HEK293T (cell line): ENCODE measurements at regions of chr7 and their contacts with region 1.

Region 1: GRCh38 chr7:73606801-73607691 is 17.3 kb downstream of the MLXIPL start:
- DNase-seq: peak; percentile 80

Region 2: DNA sequence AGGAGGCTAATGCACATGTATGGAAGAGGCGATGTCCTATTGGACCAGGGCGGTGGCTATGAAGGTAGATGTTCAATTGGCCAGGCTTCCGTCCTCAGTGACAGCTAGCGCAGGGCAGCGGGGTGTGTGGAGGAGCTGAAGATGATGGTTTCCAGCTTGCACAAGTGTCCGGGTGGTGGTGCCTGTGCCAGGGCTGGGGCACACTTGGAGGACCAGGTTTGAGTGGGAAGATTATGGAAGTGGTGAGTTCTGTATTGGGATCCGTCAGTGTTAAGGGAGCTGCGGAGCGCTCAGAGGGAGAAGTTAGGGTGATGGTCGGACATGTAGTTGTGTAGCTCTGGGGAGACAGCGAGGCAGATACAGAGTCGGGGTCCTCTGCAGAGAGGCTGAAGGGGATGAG is 20.1 kb before region 1 on chr7:
- CTCF ChIA-PET with region 1: interaction called, 13 read pairs
- POLR2A ChIA-PET with region 1: no interaction called
- DNase-seq: no peak

Region 3: DNA sequence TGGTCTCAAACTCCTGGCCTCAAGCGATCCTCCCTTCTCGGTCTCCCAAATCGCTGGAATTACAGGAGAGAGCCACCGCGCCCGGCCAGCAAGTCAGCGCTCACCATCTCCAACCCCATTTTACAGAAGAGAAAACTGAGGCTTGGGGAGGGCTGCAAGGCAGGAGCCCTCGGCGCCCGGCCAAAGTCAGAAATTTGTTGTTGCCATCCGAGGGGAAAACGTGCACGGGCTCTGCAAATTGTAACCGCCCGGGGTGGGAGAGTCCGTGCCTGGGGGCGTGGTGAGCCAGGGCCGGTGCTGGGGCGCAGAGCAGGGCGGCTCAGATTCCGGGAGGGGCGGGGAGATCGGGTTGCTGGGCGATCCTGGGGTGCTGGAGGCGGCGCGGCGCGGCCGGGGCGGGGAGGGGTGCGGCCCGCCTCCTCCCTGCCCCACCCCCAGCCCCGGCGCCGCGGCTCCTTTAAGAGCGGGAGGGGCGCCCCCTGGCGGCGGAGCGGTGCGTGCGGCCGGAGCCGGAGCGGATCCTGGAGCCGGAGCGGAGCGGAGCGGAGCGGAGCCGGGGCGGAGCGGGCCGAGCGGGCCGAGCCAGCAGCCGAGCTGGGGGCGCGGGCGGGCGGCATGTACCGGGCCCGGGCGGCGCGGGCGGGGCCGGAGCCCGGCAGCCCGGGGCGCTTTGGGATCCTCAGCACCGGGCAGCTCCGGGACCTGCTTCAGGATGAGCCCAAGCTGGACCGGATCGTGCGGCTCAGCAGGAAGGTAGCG is 60.5 kb after region 1 on chr7 and contains the start of gene VPS37D:
- CTCF ChIA-PET with region 1: interaction called, 16 read pairs
- POLR2A ChIA-PET with region 1: no interaction called
- DNase-seq: peak; percentile 89